MCF 10A (cell line): ENCODE measurements at regions of chr6 and their contacts with region 1.

Region 1: DNA sequence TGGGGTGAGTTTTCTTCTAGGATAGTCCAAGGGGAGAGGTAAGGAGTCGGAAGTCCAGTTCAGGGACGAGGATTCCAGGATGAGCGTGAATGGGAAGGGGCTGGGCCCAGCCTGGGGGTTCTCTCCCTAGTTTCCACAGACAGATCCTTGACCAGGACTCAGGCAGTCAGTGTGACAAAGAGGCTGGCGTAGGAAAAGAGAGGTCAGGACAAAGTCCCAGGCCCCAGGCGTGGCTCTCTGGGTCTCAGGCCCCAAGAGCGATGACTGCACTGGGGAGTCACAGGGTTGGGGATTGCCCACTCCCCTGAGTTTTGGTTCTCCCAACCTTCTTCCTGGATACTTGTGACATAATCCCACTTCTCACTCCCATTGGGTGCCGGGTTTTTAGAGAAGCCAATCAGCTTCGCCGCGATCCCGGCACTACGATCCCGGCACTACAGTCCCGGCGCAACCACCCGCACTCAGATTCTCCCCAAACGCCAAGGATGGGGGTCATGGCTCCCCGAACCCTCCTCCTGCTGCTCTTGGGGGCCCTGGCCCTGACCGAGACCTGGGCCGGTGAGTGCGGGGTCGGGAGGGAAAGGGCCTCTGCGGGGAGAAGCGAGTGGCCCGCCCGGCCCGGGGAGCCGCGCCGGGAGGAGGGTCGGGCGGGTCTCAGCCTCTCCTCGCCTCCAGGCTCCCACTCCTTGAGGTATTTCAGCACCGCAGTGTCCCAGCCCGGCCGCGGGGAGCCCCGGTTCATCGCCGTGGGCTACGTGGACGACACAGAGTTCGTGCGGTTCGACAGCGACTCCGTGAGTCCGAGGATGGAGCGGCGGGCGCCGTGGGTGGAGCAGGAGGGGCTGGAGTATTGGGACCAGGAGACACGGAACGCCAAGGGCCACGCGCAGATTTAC is 46.2 kb upstream of the TRIM26 start:
- DNase-seq: peak; percentile 82
- H3K4me3 Mint-ChIP-seq: peak overlapping the region; percentile 76
- H3K27ac Mint-ChIP-seq: no peak overlapping the region
- H3K4me1 Mint-ChIP-seq: peaks cover 8% of the 10 kb centered on the region
- H3K27me3 Mint-ChIP-seq: peaks cover 11% of the 10 kb centered on the region
- CTCF ChIP-seq: peak; percentile 31

Region 2: DNA sequence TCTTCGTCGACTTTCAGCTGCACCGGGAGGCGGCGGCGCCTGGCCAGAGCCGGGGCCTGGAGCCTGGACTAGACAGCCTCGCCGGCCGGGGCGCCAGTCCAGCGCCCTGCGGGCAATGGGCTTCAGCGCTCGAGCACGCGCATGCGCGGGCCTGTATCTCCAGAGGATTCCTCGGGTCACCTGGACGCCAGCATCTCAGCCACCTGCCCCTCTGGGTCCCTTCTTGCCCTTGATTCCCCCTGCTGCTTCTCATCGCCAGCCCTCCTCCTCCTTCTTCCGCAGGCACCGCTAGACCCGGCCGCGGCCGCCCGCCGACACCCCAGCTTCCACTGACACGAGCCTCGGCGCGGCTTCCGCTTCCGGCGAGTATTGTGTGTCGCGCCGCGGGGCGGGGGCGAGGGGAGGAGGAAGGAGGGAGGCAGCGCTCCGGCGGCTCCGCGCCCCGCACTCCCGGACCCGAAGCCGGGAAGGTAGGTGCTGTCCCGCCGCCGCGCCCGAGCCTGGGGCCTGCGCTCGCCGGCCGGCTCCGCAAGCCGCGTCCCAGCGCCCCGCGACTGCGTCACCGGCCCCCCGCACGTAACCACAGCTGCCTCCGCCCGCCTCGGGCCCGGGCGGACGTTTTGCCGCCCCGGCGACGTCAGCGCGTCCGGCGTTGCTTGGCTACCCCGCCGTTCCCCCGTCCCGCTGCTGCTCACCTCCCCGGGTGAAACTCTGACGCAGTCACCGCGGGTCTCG is 67.3 kb after region 1 on chr6 and contains the start of gene TRIM39:
- CTCF ChIA-PET with region 1: no interaction called
- POLR2A ChIA-PET with region 1: interaction called, 10 read pairs
- intact Hi-C with region 1: no loop called
- DNase-seq: peak; percentile 81
- H3K4me3 Mint-ChIP-seq: peak within 1 kb of the TSS; percentile 90
- H3K27ac Mint-ChIP-seq: peak within 1 kb of the TSS; percentile 98
- H3K4me1 Mint-ChIP-seq: peaks cover 30% of the 10 kb centered on the region
- H3K27me3 Mint-ChIP-seq: no peaks in the 10 kb centered on the region
- CTCF ChIP-seq: no peak
- total RNA-seq, gene TRIM39: 14.7 and 18.6 TPM in 2 replicates